ENCODE measurements at regions of chr12 and their contacts with region 1.

Region 1: DNA sequence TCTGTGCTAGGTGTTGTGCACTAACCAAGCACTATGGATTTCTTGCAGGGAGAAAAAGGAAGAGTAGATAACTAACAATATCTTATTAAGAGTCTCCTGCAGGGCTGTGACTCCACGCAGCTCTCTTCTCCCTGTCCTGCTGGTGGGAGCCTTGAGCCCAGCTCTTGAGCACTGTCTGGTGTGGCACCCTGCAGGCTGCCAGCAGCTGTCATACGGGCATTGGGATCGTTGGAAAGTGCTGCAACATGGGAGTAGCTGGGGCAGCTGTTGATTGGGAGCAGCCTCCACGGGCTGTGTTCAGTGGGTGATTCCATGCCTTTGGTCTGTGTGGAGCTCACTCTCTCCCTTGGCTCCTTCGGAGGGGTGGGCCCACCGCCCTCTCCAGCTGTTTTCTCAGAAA is 125.3 kb downstream of the FBXL14 start:
- DNase-seq: no peak
- H3K4me3 ChIP-seq: no peak overlapping the region
- CTCF ChIP-seq: no peak

Region 2: GRCh38 chr12:1367331-1368291 is 101.5 kb before region 1 on chr12:
- in situ Hi-C with region 1: loop called (anchors 5 kb)
- DNase-seq: no peak
- H3K4me3 ChIP-seq: no peak overlapping the region
- CTCF ChIP-seq: no peak

Measured in astrocyte of the cerebellum (primary cell).